Activated CD4-positive, alpha-beta T cell treated with anti-CD3 and anti-CD28 coated beads for 36 hours (primary cell): ENCODE measurements at regions of chr17 and their contacts with region 1.

Region 1: DNA sequence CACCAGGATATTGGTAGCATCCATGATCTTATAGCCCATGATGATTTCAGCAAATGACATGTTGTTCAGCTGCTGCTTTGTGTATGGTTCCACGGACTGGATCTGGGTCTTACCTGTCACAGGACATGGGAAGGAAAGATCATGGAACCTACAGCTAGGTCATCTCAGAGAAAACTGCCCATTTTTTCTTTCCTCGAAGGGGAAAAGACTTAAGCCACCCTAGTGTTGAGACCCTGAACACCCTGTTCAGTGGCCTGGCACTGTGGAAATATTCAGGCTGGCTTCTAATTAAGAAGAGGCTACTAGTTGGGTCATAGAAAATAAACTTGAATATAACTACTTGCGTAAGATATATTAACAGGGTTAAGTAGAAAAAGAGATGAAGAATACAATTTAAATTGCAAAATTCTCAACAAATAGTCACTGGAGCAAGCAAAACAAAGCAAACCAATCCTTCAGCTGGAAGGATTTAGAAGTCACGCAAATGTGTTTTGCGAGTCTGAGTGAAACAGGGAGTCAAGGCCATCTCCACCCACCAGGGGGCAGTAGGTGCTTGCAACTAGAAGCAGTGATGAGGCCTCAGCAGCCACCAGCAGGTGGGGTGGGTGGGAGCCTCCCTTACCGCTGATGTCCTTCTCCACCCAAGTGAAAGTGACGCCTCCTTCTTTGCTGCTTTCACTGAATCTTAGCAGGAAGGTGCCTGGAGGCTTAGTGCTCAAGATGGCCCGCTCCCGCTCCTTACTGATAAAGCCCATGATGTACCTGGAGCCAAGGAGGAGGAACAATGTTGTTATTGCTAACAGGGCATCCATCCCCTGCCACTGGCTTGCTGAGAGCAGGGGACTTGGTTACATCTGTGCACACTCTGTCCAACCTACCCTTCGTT is 34.3 kb downstream of the STAT5A start:
- DNase-seq: peak; percentile 97
- ATAC-seq: peak; percentile 87
- H3K4me3 Mint-ChIP-seq: peak overlapping the region; percentile 37
- H3K27ac Mint-ChIP-seq: peak overlapping the region; percentile 56
- H3K4me1 Mint-ChIP-seq: peaks cover 45% of the 10 kb centered on the region
- H3K27me3 Mint-ChIP-seq: no peaks in the 10 kb centered on the region

Region 2: DNA sequence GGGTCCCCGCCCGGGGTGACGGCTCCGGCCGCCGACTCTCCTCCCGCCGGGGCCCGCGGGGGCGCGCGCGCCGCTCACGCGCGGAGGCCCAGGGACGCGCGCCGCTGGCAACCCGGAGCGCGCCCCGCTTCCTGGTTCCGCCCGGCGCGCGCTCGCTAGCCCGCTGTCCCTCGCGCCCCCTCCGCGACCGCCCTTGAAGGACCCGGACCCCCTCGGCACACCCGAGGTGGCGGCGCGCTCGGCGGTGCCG is 46.3 kb before region 1 on chr17 and contains the start of gene STAT5B:
- CTCF ChIA-PET with region 1: no interaction called
- POLR2A ChIA-PET with region 1: no interaction called
- intact Hi-C with region 1: no loop called
- DNase-seq: peak; percentile 80
- ATAC-seq: peak; percentile 51
- H3K4me3 Mint-ChIP-seq: peak within 1 kb of the TSS; percentile 94
- H3K27ac Mint-ChIP-seq: peak within 1 kb of the TSS; percentile 97
- H3K4me1 Mint-ChIP-seq: peaks cover 37% of the 10 kb centered on the region
- H3K27me3 Mint-ChIP-seq: no peaks in the 10 kb centered on the region
- total RNA-seq, gene STAT5B: 162 to 203 TPM

Region 3: GRCh38 chr17:42312285-42313130 is 10.1 kb before region 1 on chr17:
- CTCF ChIA-PET with region 1: interaction called, 44 read pairs
- POLR2A ChIA-PET with region 1: interaction called, 4 read pairs
- intact Hi-C with region 1: no loop called
- DNase-seq: peak; percentile 94
- ATAC-seq: peak; percentile 69
- H3K4me3 Mint-ChIP-seq: peak overlapping the region; percentile 66
- H3K27ac Mint-ChIP-seq: peak overlapping the region; percentile 96
- H3K4me1 Mint-ChIP-seq: peaks cover 90% of the 10 kb centered on the region
- H3K27me3 Mint-ChIP-seq: no peaks in the 10 kb centered on the region

Region 4: GRCh38 chr17:42347198-42347597 is 24.6 kb after region 1 on chr17:
- CTCF ChIA-PET with region 1: interaction called, 22 read pairs
- POLR2A ChIA-PET with region 1: no interaction called
- intact Hi-C with region 1: no loop called
- DNase-seq: no peak
- ATAC-seq: no peak
- H3K4me3 Mint-ChIP-seq: no peak overlapping the region
- H3K27ac Mint-ChIP-seq: peak overlapping the region; percentile 41
- H3K4me1 Mint-ChIP-seq: peaks cover 57% of the 10 kb centered on the region
- H3K27me3 Mint-ChIP-seq: no peaks in the 10 kb centered on the region

Region 5: DNA sequence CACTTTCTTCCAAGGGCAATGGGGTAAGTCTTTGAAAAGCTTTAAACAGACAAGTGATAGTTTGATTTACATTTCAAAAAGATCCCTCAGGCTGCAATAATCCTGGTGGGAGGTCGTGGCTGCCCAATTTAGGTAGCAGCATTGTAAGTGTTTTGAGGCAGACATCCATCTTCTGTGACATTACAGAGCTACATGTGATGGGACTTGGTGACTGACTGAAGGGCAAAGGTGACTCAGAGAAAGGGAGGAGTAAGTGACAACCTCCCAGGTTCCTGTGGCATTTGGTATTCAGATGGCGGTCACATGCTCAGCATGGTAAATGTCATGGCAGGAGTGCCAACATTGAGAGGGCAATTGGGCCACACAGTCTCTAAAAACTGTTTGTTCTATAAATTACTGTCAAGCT is 39.2 kb after region 1 on chr17:
- CTCF ChIA-PET with region 1: interaction called, 6 read pairs
- POLR2A ChIA-PET with region 1: no interaction called
- intact Hi-C with region 1: loop called in 1 of 2 experiments (anchors 2 kb)
- DNase-seq: peak; percentile 77
- ATAC-seq: peak; percentile 92
- H3K4me3 Mint-ChIP-seq: peak overlapping the region; percentile 42
- H3K27ac Mint-ChIP-seq: peak overlapping the region; percentile 83
- H3K4me1 Mint-ChIP-seq: peaks cover 82% of the 10 kb centered on the region
- H3K27me3 Mint-ChIP-seq: no peaks in the 10 kb centered on the region

Region 6: DNA sequence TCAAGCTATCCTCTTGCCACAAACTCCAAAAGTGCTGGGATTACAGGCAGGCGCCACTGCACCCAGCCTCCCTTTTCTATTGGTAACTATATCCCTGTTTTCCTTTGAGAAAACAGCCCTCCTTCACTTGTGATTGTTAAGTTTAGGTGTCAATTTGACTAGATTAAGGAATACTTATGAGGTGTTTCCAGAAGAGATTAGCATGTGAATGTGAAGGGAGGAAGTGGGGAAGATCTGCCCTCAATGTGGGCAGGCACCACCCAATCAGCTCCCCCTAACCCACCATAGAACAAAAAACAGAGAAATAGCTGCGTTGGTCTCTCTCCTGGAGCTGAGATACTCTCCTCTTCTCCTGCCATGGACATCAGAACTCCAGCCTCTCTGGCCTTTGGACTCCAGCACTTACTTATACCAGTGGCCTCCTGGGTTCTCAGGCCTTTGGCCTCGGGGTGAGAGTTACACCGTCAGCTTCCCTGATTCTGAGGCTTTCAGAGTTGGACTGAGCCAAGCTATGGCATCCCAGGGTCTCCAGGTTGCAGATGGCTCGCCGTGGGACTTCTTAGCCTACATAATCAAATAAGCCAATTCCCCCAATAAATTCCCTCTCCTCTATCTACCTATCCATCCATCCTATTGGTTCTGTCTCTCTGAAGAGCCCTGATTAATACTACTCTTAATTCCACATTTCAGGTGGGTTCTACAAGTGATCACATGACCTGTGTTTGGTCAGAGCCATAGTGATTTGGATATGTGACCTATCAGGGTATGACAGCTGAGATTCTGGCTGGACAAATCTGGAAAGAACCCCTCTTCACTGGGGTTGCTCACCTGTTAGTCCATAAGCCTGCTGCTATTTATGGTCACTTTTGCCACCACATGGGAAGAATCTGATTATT is 77.6 kb after region 1 on chr17:
- CTCF ChIA-PET with region 1: interaction called, 228 read pairs
- POLR2A ChIA-PET with region 1: interaction called, 3 read pairs
- intact Hi-C with region 1: loop called in 1 of 2 experiments (anchors 1 kb)
- DNase-seq: no peak
- ATAC-seq: no peak
- H3K4me3 Mint-ChIP-seq: no peak overlapping the region
- H3K27ac Mint-ChIP-seq: peak overlapping the region; percentile 2
- H3K4me1 Mint-ChIP-seq: peaks cover 16% of the 10 kb centered on the region
- H3K27me3 Mint-ChIP-seq: peaks cover 2% of the 10 kb centered on the region

Region 7: DNA sequence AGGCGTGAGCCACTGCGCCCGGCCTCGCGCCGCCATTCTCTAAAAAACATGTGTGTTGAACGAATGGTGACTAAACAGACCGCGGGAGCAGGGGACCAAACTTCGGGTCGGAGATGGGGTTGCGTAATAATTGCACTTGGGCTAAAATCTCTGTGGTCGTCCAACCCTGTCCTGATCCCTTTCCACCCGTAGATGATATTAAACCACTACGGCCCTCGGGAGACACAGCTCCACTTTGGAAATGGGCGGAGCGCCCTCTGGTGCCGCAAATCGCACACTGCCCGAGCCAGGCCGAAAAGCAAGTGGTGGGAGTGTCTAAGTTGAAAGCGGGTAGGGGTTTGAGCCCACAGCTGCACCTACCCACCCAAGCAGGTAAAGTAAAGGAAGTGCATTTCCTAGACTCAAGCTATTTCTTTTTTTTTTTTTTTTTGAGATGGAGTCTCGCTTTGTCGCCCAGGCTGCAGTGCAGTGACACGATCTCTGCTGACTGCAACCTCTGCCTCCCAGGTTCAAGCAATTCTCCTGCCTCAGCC is 83.4 kb after region 1 on chr17:
- CTCF ChIA-PET with region 1: interaction called, 228 read pairs
- POLR2A ChIA-PET with region 1: interaction called, 3 read pairs
- intact Hi-C with region 1: loop called (anchors 1 kb)
- DNase-seq: peak; percentile 91
- ATAC-seq: peak; percentile 69
- H3K4me3 Mint-ChIP-seq: no peak overlapping the region
- H3K27ac Mint-ChIP-seq: no peak overlapping the region
- H3K4me1 Mint-ChIP-seq: peaks cover 19% of the 10 kb centered on the region
- H3K27me3 Mint-ChIP-seq: no peaks in the 10 kb centered on the region

Region 8: GRCh38 chr17:42517516-42517915 is 194.9 kb after region 1 on chr17:
- CTCF ChIA-PET with region 1: interaction called, 4 read pairs
- POLR2A ChIA-PET with region 1: no interaction called
- intact Hi-C with region 1: loop called (anchors 1 to 5 kb)
- DNase-seq: peak; percentile 89
- ATAC-seq: peak; percentile 92
- H3K4me3 Mint-ChIP-seq: no peak overlapping the region
- H3K27ac Mint-ChIP-seq: no peak overlapping the region
- H3K4me1 Mint-ChIP-seq: peaks cover 4% of the 10 kb centered on the region
- H3K27me3 Mint-ChIP-seq: peaks cover 2% of the 10 kb centered on the region